Activated CD4-positive, alpha-beta memory T cell treated with anti-CD3 and anti-CD28 coated beads for 36 hours (primary cell): ENCODE measurements at regions of chr15 and their contacts with region 1.

Region 1: DNA sequence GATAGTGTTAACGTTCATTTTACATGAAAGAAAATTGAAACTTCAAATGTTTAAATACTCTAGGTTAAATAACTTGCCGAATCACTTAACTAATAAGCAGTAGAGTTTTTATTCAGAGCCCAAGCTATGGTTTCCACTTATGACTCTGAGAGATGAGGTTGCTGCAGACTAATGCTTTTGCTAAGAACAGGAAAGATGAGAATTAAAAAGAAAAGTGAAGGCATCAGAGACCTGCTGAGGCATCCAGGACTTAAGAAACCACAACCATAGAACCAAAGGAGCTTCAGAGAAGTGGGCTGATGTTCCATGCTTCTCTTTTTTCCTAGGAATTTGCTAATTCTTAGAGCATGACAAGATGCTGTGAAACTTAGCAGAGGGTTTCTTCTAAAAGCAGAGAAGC is 9.5 kb downstream of the HMG20A start:
- DNase-seq: no peak
- H3K4me3 Mint-ChIP-seq: no peak overlapping the region
- H3K27ac Mint-ChIP-seq: peak overlapping the region; percentile 66
- H3K4me1 Mint-ChIP-seq: peaks cover 35% of the 10 kb centered on the region
- H3K27me3 Mint-ChIP-seq: no peaks in the 10 kb centered on the region

Region 2: DNA sequence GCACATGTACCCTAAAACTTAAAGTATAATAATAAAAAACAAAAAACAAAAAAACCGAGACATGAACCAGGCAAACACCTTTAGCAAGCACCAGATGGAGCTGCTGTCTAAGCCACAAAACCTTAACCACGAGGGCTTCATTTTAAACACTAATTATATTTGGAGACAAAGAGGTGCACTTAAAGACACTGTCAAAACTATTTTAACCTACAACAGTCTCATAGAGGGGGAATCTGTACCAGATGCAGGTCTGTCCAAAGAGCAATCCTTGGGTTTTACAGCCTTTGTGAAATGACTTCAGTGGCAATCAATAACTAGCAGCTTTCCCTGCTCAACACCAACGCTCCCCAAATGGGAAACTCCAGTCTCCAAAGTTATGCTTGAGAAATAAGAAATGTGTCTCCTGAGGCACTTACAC is 243.6 kb before region 1 on chr15:
- CTCF ChIA-PET with region 1: no interaction called
- POLR2A ChIA-PET with region 1: no interaction called
- intact Hi-C with region 1: loop called (anchors 10 kb)
- DNase-seq: no peak
- H3K4me3 Mint-ChIP-seq: no peak overlapping the region
- H3K27ac Mint-ChIP-seq: no peak overlapping the region
- H3K4me1 Mint-ChIP-seq: peaks cover 39% of the 10 kb centered on the region
- H3K27me3 Mint-ChIP-seq: no peaks in the 10 kb centered on the region